A673 (cell line): ENCODE measurements at regions of chr3 and their contacts with region 1.

Region 1: DNA sequence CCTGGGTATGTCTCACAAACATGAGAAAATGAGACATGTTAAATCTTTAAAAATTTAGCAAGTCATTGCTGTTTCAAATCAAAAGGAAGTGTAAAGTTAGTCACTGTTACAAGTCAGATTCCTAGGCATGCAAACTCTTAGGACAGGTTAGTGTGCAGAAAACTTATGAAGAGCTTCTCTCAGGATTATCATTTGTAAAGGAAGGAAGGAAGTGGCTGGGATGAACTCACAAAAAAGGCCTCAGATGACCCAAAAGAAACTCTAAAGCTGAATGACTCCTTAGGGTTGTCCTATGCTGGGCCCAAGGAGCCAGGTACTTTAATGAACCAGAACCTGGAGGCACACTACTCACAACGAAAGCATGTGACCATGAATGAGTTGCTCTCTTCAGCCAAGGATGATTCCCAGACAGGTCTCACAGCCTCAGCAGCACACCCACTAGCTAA is 25.0 kb downstream of the MSL2 start:
- DNase-seq: no peak
- H3K4me3 ChIP-seq: no peak overlapping the region
- H3K27ac ChIP-seq: peak overlapping the region; percentile 20
- H3K4me1 ChIP-seq: peaks cover 59% of the 10 kb centered on the region
- H3K27me3 ChIP-seq: no peaks in the 10 kb centered on the region
- CTCF ChIP-seq: no peak

Region 2: DNA sequence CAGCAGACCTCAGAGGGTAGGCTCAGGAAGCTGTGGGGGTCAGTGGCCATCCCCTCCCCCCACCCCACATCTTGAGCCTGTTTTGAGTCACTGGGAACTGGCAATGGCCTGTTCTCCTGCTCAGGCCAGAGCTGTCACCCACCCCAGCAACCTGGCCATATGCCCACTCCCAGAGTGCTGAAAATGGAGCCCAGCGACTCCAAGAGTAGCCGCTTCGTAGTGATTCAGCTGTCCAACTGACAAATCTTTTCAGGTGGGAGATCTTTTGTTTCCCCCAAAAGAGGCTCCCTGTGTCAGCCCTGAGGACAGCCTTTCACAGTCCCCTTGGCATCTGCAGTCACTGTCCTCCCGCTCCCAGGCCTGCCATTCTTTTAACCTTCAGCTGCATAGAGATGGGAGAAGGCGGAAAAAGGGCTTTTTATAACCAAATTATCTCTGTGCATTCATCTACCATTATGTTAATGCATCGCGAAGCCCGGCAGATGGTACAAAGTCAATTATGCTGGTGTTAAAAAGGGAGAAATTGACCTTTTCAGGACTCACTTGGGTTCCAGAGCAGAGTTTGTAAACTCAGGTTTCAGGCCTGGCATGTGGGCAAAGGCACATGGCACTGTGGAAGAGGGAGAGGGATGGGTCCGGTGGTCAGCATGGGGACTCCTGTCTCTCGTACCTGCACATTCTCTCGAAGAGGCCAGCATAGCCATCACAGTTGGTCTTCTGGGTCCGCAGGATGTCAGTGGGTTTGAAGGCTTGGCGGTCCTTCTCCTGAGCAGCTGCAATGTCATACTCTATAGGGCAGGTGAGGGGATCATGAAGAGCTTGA is 1552.4 kb before region 1 on chr3:
- CTCF ChIA-PET with region 1: no interaction called
- POLR2A ChIA-PET with region 1: no interaction called
- intact Hi-C with region 1: no loop called
- DNase-seq: no peak
- H3K4me3 ChIP-seq: no peak overlapping the region
- H3K27ac ChIP-seq: no peak overlapping the region
- H3K4me1 ChIP-seq: no peaks in the 10 kb centered on the region
- H3K27me3 ChIP-seq: no peaks in the 10 kb centered on the region
- CTCF ChIP-seq: no peak

Region 3: GRCh38 chr3:135834465-135834864 is 336.7 kb before region 1 on chr3:
- CTCF ChIA-PET with region 1: no interaction called
- POLR2A ChIA-PET with region 1: no interaction called
- intact Hi-C with region 1: no loop called
- DNase-seq: no peak
- H3K4me3 ChIP-seq: no peak overlapping the region
- H3K27ac ChIP-seq: no peak overlapping the region
- H3K4me1 ChIP-seq: no peaks in the 10 kb centered on the region
- H3K27me3 ChIP-seq: peaks cover 6% of the 10 kb centered on the region
- CTCF ChIP-seq: no peak

Region 4: GRCh38 chr3:136186344-136186743 is 15.2 kb after region 1 on chr3:
- CTCF ChIA-PET with region 1: no interaction called
- POLR2A ChIA-PET with region 1: interaction called, 12 read pairs
- intact Hi-C with region 1: no loop called
- DNase-seq: no peak
- H3K4me3 ChIP-seq: no peak overlapping the region
- H3K27ac ChIP-seq: no peak overlapping the region
- H3K4me1 ChIP-seq: peaks cover 34% of the 10 kb centered on the region
- H3K27me3 ChIP-seq: no peaks in the 10 kb centered on the region
- CTCF ChIP-seq: no peak